CD14-positive monocyte (primary cell): ENCODE measurements at regions of chr19 and their contacts with region 1.

Region 1: DNA sequence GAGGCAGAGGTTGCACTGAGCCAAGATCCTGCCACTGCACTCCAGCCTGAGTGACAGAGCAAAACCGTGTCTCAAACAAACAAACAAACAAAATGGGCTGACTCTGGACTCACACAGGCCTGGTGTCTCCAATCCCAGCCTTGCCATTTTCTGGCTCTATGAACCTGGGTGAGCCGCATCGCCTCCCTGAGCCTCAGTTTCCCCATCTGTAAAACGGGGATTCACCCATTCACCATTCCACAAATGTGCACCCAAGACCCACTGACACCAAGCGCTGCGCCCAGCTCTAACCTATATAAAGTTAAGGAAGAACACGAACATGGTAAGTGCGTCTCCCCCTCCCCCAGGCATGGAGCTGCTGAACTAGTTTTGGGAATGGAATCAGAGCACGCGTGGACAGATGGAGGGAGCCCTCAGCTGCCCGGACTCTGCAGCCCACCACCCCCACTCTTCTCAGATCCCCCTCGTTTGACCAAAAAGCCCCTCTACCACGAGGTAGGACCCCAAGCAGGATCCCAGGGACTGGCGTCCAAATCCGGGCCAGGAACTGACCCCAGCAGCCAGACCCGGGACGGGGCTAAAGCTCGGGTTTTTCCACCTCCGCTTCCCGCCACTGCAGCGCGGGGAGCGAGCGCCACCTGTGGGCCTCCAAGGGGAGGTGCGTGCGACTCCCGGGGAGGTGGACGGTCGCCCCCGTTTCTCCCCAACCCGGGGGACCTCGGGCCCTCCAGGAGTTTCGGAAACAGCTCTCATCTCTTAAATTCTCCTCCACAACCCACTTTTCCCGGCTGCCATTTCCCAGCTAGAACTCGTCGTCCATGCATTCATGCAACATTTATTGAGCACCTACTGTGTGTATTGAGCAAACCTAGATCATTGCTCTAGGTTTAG is 33.0 kb upstream of the ADGRE5 start:
- DNase-seq: peak; percentile 48 to 66 (median 59)
- H3K4me3 ChIP-seq: peak overlapping the region in 1 of 3 experiments; percentile 61
- H3K4me3 Mint-ChIP-seq: peak overlapping the region; percentile 48 to 67
- H3K27ac ChIP-seq: no peak overlapping the region
- H3K27ac Mint-ChIP-seq: no peak overlapping the region
- H3K4me1 ChIP-seq: peaks cover 12 to 15% of the 10 kb centered on the region in 2 donors
- H3K4me1 Mint-ChIP-seq: peaks cover 24% of the 10 kb centered on the region
- H3K27me3 ChIP-seq: no peaks in the 10 kb centered on the region
- H3K27me3 Mint-ChIP-seq: peaks cover 3 to 12% (median 9%) of the 10 kb centered on the region in 3 donors
- CTCF ChIP-seq: peak; percentile 98

Region 2: DNA sequence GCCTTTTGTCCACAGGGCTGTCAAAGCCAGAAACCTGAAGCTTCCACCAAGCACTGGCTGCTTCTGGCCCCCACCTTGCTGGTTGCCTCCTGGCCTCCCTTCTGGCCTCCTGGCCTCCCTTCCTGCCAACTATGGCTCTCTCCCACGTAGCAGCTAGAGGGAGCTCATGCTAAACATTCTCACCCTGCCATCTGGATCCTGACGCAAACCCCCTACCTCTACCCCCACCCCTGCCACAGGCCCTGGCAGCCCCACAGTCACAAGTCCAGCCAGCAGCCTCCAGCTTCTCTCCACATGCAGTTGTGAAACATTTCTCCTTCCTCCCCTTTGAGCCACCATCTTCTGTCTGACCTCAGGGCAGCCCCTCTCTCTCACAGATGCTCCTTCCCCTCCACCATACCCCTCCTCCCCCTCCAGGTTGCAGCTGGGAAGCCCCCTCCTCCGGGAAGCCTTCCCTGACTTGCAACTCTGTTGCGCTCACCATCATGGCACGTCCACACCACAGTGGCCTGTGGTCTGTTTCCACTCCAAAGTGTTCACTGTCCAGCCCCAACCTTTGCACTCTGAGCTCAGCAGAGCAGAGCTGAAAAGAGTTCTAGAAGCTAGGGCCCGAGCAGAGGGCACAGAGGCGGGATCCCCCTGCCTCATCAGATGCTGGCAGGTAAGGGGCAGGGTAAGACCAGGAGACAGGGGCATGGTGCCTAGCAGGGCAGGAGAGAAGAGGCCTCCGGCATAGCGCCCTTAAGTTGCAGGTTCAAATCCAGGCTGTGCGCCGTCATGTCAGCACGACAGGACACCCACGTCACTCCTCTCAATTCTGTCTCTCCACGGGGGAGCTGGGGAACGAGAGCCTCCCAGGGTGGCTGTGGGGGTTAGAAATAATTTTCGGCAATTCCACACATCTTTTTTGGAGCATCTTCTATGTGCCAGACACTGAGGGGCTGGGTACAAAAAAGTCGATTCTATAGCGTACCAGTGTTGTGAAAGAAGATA is 149.6 kb before region 1 on chr19:
- intact Hi-C with region 1: loop called (anchors 2 to 5 kb)
- DNase-seq: no peak
- H3K4me3 ChIP-seq: no peak overlapping the region
- H3K4me3 Mint-ChIP-seq: no peak overlapping the region
- H3K27ac ChIP-seq: no peak overlapping the region
- H3K27ac Mint-ChIP-seq: no peak overlapping the region
- H3K4me1 ChIP-seq: no peaks in the 10 kb centered on the region
- H3K4me1 Mint-ChIP-seq: peaks cover 5% of the 10 kb centered on the region
- H3K27me3 ChIP-seq: peaks cover 3 to 7% of the 10 kb centered on the region in 2 donors
- H3K27me3 Mint-ChIP-seq: peaks cover 8 to 28% (median 23%) of the 10 kb centered on the region in 3 donors
- CTCF ChIP-seq: no peak

Region 3: GRCh38 chr19:14366498-14366915 is 18.3 kb after region 1 on chr19:
- intact Hi-C with region 1: no loop called
- DNase-seq: peak; percentile 69 to 78 (median 74)
- H3K4me3 ChIP-seq: peak overlapping the region in 1 of 3 experiments; percentile 53
- H3K4me3 Mint-ChIP-seq: peak overlapping the region; percentile 39 to 67
- H3K27ac ChIP-seq: peak overlapping the region in 1 of 2 donors; percentile 40
- H3K27ac Mint-ChIP-seq: peak overlapping the region; percentile 91 to 98 (median 95)
- H3K4me1 ChIP-seq: peaks cover 81 to 82% of the 10 kb centered on the region in 2 donors
- H3K4me1 Mint-ChIP-seq: peaks cover 78% of the 10 kb centered on the region
- H3K27me3 ChIP-seq: no peaks in the 10 kb centered on the region
- H3K27me3 Mint-ChIP-seq: peaks cover 0 to 7% (median 3%) of the 10 kb centered on the region in 3 donors
- CTCF ChIP-seq: no peak